HAP-1 (cell line): ENCODE measurements at regions of chr19 and their contacts with region 1.

Region 1: GRCh38 chr19:33778089-33778791 is 18.4 kb upstream of the KCTD15 start:
- DNase-seq: peak; percentile 65 to 90
- H3K4me3 ChIP-seq: no peak overlapping the region
- H3K4me1 ChIP-seq: peaks cover 3% of the 10 kb centered on the region
- H3K27me3 ChIP-seq: no peaks in the 10 kb centered on the region

Region 2: DNA sequence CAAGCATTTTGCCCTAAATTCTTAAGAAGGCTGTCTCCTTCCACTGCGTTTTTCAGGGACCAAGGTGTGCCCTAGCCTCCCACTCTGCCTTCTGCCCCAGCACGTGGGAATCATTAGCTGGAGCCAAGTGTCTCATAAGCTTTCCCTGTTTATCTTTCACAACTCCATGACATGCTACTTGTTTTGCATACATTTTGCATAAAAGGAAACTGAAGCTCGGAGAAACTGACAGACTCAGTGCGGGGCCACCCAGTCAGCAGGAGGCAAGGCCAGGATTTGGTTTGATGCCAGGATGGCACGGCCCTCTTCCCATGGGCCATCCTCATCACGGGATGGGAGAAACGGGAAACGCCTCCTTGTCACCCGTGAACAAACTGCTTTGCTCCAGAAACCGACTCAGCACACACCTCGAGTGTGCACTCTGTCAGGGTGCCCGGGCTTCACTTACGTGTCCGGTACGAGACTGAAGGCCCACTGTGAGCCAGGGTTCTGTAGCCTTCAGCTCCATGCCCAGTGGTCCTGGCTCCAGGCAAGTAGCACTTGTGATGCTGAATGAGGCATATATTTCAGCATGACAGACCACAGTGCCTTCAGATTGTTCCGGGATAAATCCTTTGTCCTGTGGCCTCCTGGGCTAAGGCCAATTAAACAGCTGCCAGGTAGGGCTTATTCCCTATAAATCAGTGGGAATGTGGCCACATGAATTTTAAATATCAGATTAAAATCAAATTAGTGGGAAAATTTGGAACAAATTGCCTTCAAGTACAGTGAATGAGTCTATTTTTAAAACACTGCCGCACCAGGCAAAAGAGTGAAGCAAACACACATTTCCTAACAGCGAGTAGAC is 485.4 kb before region 1 on chr19:
- in situ Hi-C with region 1: no loop called
- DNase-seq: no peak
- H3K4me3 ChIP-seq: no peak overlapping the region
- H3K4me1 ChIP-seq: no peaks in the 10 kb centered on the region
- H3K27me3 ChIP-seq: no peaks in the 10 kb centered on the region

Region 3: DNA sequence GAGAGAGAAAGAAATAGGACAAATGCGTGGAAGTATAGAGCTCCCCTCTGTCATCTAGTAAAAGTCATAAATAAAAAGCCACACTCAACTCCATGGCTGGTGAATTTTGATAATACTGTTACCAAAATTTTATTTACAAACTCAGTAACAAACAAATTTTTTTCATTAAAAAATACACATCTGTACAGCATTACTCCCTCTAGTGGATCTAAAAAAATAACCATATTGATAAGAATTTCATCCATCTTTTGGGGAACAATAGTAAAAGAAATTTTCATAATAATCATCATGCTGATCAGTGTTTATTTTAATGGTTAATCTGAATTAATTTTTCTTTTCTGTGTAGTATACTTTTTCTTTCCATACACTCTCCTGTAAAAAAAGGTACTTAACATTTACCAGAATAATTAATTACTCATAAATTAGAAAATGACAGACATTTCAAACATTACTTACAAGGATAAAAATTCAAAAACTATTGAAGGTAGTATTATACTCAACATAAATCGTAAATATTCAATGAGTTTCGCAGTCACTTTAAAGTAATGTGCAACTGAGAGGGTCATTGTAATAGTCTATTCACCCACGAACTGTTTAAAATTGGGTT is 220.6 kb after region 1 on chr19:
- in situ Hi-C with region 1: loop called (anchors 5 kb)
- DNase-seq: peak in 1 of 2 experiments; percentile 14
- H3K4me3 ChIP-seq: no peak overlapping the region
- H3K4me1 ChIP-seq: peaks cover 4% of the 10 kb centered on the region
- H3K27me3 ChIP-seq: no peaks in the 10 kb centered on the region; the same call in none of the 2 replicates

Region 4: DNA sequence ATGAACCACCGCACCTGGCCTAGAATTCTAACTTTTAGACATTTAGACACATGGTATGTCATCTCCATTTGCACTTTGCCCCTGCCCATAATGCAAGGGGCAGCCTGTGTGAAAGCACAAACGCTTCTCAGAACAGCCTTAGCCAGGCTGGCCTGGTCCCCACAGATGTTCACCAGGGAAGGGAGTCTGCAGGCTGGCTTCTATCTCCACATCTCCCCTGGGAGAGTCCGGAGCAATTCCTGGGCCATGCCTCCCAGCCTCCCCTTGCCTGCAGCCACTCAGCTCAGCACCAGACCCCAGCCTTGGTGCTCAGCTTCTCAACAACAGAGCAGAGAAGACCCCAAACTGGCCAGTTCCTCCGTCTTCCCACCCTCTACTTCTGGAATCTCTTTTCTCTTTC is 372.3 kb after region 1 on chr19:
- in situ Hi-C with region 1: loop called (anchors 5 kb)
- DNase-seq: no peak
- H3K4me3 ChIP-seq: no peak overlapping the region
- H3K4me1 ChIP-seq: no peaks in the 10 kb centered on the region
- H3K27me3 ChIP-seq: no peaks in the 10 kb centered on the region

Region 5: DNA sequence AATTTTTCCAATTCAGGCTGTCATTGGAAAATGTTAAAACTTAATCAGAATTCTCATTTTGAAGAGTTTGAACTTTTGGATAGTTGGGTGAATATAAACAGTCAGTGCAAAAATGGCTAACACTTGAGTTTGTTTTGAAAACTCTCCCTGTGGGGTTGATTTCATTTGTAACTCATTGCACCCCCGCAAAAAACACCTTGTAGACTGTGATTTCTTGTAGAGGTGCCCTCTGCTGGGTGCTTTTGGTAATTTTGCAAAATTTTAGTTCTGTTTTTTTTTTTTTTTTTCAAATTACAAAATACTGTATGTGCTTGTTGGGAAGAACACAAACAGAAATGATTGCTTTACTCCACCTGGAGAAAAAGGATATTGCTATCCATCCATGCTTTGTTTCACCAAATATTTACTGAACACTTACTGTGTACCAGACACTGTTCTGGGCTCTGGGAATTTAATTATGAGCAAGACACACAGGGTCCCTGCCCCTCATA is 558.6 kb after region 1 on chr19:
- in situ Hi-C with region 1: loop called (anchors 10 kb)
- DNase-seq: peak in 1 of 2 experiments; percentile 50
- H3K4me3 ChIP-seq: no peak overlapping the region
- H3K4me1 ChIP-seq: no peaks in the 10 kb centered on the region
- H3K27me3 ChIP-seq: no peaks in the 10 kb centered on the region